Activated CD4-positive, alpha-beta T cell treated with anti-CD3 and anti-CD28 coated beads, Interleukin-2, amount 10 ng/mL, durations not matched to agents 24 days and 14 days (primary cell): ENCODE measurements at regions of chr1 and their contacts with region 1.

Region 1: DNA sequence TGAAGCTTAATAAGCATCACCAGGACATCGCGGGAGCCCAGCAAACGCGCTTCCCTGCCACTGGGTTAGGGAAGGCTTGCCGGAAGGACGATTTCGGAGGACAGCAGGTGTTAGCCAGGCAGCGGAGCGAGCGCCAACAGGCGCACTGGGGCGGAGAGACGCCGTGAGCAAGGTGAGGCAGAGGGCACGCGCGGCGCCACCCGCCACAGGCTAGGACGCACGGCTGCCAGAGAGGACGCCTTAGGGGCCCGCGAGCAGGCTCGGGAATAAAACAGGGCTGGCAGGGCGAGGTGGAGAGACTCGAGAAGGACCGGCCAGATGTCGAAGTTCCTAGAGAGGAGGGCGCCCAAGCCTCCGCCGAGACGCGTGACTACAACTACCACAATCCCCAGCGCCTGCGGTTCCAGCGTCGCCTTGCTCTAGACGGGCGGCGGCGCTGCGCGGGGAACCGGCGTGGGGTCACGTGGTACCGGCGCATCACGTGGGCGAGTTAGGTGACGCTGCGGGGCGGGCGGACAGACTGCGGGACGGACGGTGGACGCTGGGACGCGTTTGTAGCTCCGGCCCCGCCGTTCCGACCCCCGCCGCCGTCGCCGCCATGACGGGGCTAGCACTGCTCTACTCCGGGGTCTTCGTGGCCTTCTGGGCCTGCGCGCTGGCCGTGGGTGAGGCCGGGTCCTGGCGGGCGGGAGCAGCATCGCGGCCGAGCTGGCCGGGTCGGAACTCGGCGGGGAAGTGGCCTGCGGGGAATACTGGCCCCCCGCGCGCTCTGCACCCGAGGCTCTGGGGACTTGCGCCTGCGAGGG is at the start of gene ATP6V0B:
- DNase-seq: peak; percentile 99
- H3K4me3 Mint-ChIP-seq: peak within 1 kb of the TSS; percentile 91
- H3K27ac Mint-ChIP-seq: peak within 1 kb of the TSS; percentile 86
- H3K4me1 Mint-ChIP-seq: peaks cover 49% of the 10 kb centered on the region
- H3K27me3 Mint-ChIP-seq: no peaks in the 10 kb centered on the region
- total RNA-seq, gene ATP6V0B: 181 and 182 TPM in 2 replicates

Region 2: GRCh38 chr1:43991476-43992231 is 17.0 kb after region 1 on chr1 and contains the start of gene CCDC24:
- intact Hi-C with region 1: loop called (anchors 1 kb)
- DNase-seq: peak; percentile 95
- H3K4me3 Mint-ChIP-seq: peak within 1 kb of the TSS; percentile 92
- H3K27ac Mint-ChIP-seq: peak within 1 kb of the TSS; percentile 84
- H3K4me1 Mint-ChIP-seq: peaks cover 14% of the 10 kb centered on the region
- H3K27me3 Mint-ChIP-seq: no peaks in the 10 kb centered on the region
- total RNA-seq, gene CCDC24: 3.0 and 4.3 TPM in 2 replicates